ENCODE measurements at regions of chr19 and their contacts with region 1.

Region 1: DNA sequence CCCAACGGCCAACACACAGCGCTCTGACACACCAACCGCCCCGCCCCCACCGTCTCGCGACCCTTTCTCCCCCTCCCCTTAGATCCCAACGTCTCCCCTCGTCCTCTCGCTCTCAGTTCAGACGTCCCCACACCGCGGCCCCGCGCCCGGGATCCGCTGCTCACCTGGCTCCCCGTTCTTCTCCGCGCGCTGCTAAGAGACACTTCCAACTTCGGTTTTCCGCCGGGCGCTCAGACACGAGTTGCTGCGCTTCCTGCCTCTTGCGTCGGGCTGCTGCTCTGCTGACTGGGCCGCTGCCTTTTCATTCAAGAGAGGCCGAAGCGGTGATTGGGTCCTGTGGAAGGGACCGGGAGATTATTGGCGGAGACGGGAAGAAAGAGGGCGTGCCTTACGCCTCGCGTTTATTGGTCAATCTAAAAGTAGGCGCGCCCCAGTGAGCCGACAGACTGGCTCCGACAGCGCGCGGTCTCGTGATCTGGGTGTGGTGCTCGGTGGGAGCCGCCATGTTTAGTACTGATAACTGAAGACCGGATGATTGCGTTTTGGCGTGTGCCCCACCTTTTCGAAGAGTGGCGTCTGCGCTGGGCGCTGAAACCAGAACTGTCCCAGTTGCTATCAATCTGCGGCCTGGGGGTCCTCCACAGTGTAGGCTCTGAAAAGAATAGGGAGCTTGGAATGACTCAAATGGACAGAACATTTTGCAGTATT is at the start of gene DDX39A:
- DNase-seq: peak; percentile 98 to 99 (median 99)
- ATAC-seq: peak; percentile 98 to 99 (median 98)
- H3K4me3 ChIP-seq: peak within 1 kb of the TSS; percentile 77 to 98 (median 92)
- H3K27ac ChIP-seq: peak within 1 kb of the TSS; percentile 55 to 95 (median 88)
- H3K4me1 ChIP-seq: peaks cover 0 to 62% (median 27%) of the 10 kb centered on the region in 12 donors
- H3K27me3 ChIP-seq: no peaks in the 10 kb centered on the region
- CTCF ChIP-seq: no peak
- POLR2A ChIP-seq: peak in 1 of 2 donors; percentile 50
- total RNA-seq, gene DDX39A: 18.0 to 44.4 (median 30.2) TPM

Region 2: GRCh38 chr19:14383661-14384555 is 35.4 kb before region 1 on chr19:
- intact Hi-C with region 1: loop called in 1 of 10 experiments (anchors 5 kb)
- DNase-seq: peak in 4 of 5 donors; percentile 45 to 70 (median 63)
- ATAC-seq: peak in 3 of 4 donors; percentile 5 to 34 (median 18)
- H3K4me3 ChIP-seq: peak overlapping the region in 10 of 12 donors; percentile 13 to 84 (median 70)
- H3K27ac ChIP-seq: peak overlapping the region; percentile 4 to 95 (median 80)
- H3K4me1 ChIP-seq: peaks cover 3 to 84% (median 39%) of the 10 kb centered on the region in 12 donors
- H3K27me3 ChIP-seq: no peaks in the 10 kb centered on the region
- CTCF ChIP-seq: no peak
- POLR2A ChIP-seq: no peak